ENCODE measurements at regions of chr5 and their contacts with region 1.

Region 1: GRCh38 chr5:172188033-172188892 is at the start of gene STK10:
- DNase-seq: peak; percentile 94
- H3K4me3 Mint-ChIP-seq: peak within 1 kb of the TSS; percentile 96
- H3K27ac Mint-ChIP-seq: peak within 1 kb of the TSS; percentile 94
- H3K4me1 Mint-ChIP-seq: peaks cover 32% of the 10 kb centered on the region
- H3K27me3 Mint-ChIP-seq: peaks cover 20% of the 10 kb centered on the region

Region 2: DNA sequence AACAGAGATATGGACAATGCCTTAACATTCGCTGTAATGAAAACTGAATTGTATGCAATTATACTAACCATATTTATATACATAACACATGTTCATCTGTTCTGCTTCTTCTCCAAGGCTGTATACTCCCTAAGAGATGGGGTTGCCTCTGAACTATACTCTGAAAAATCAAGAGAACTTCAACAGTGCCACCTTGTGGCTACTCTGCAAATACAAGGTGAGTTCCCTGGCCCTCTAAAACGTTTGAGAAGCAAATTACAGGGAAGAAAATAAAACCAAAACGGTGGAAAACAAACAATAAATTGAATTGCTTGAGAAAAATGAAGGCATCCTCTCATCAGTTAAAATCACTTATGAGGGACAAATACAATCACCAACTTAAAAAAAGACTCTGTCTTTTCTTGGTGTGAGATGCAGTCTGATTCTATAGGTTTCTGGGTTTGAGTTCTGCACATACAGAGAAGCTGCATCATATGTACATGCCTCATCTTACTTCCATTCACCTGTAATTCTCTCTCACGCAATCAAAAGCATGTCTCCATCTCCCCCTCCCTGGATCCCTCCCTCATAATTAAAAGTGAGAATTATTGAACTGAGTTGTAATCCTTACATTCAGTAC is 280.4 kb before region 1 on chr5:
- CTCF ChIA-PET with region 1: interaction called, 10 read pairs
- DNase-seq: peak; percentile 62
- H3K4me3 Mint-ChIP-seq: no peak overlapping the region
- H3K27ac Mint-ChIP-seq: no peak overlapping the region
- H3K4me1 Mint-ChIP-seq: peaks cover 30% of the 10 kb centered on the region
- H3K27me3 Mint-ChIP-seq: no peaks in the 10 kb centered on the region

Region 3: GRCh38 chr5:172065501-172065990 is 122.7 kb before region 1 on chr5:
- CTCF ChIA-PET with region 1: interaction called, 12 read pairs
- DNase-seq: peak; percentile 13
- H3K4me3 Mint-ChIP-seq: no peak overlapping the region
- H3K27ac Mint-ChIP-seq: peak overlapping the region; percentile 90
- H3K4me1 Mint-ChIP-seq: peaks cover 60% of the 10 kb centered on the region
- H3K27me3 Mint-ChIP-seq: no peaks in the 10 kb centered on the region

Region 4: GRCh38 chr5:172106511-172107356 is 81.5 kb before region 1 on chr5:
- CTCF ChIA-PET with region 1: interaction called, 69 read pairs
- DNase-seq: peak; percentile 73
- H3K4me3 Mint-ChIP-seq: no peak overlapping the region
- H3K27ac Mint-ChIP-seq: peak overlapping the region; percentile 83
- H3K4me1 Mint-ChIP-seq: peaks cover 54% of the 10 kb centered on the region
- H3K27me3 Mint-ChIP-seq: no peaks in the 10 kb centered on the region

Region 5: GRCh38 chr5:172114875-172115422 is 73.3 kb before region 1 on chr5:
- CTCF ChIA-PET with region 1: interaction called, 36 read pairs
- DNase-seq: peak; percentile 88
- H3K4me3 Mint-ChIP-seq: peak overlapping the region; percentile 74
- H3K27ac Mint-ChIP-seq: peak overlapping the region; percentile 96
- H3K4me1 Mint-ChIP-seq: peaks cover 87% of the 10 kb centered on the region
- H3K27me3 Mint-ChIP-seq: no peaks in the 10 kb centered on the region

Region 6: DNA sequence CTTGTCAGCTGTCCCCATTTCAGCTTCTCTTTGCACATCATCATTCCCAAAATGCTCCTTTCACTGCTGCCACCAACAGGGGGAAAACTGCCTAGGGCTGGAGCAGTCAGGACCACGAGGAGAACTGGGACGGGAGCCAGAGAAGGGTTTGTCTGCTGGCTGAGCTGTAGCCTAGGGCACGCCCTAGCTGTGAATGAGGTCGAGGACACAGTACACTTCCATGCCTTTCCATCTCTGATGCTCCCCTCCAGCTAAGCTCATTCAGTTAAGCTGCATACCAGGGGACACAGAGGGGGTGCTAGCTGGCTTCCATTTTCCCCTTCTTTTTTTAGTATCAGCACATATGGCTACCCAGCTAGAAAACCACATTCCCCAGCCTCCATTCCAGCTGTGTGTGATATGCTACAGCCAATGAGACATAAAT is 65.0 kb before region 1 on chr5:
- CTCF ChIA-PET with region 1: interaction called, 10 read pairs
- DNase-seq: no peak
- H3K4me3 Mint-ChIP-seq: no peak overlapping the region
- H3K27ac Mint-ChIP-seq: peak overlapping the region; percentile 37
- H3K4me1 Mint-ChIP-seq: peaks cover 40% of the 10 kb centered on the region
- H3K27me3 Mint-ChIP-seq: no peaks in the 10 kb centered on the region

Region 7: DNA sequence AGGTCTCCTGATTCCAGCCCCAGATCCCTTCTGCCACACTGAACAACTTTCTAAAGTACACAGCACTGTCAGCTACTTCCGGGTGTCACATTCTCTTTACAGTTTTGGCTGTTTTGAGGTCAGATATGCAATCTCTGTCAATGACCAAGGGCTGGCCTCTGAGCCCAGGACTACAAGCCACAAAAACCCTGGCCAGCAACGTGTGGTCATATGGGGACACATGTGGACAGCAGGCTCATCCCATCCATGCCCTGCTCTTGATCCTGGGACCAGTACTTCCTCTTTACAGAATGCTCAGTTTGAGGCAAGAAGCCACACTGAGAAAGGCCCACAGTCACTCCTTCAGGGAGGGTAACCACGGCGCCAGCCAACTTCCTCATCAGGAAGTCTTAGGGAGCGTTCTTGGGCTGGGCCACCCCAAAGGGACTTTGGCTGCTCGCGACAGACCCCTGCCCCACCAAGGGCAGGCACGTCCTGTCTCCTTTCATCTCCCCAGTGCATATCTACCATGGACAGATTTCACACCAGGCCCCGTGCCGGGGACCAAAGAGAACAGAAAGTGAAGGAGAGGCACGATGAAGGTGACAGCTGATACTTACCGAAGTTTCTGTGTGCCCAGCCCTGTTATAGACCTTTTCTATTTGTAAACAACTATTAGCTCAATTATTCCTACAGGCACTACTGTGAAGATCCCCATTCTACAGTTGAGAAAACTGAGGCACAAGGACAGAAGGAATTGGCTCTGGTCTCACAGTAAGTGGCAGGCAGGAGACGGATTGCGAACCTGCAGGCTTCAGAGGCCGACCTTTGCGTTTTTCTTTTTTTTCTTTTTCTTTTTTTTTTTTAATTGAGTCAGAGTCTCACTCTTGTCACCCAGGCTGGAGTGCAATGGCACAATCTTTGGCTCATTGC is 37.5 kb before region 1 on chr5:
- CTCF ChIA-PET with region 1: interaction called, 11 read pairs
- DNase-seq: peak; percentile 58
- H3K4me3 Mint-ChIP-seq: peak overlapping the region; percentile 51
- H3K27ac Mint-ChIP-seq: peak overlapping the region; percentile 84
- H3K4me1 Mint-ChIP-seq: peaks cover 66% of the 10 kb centered on the region
- H3K27me3 Mint-ChIP-seq: no peaks in the 10 kb centered on the region

Region 8: GRCh38 chr5:172245703-172246125 is 57.5 kb after region 1 on chr5:
- CTCF ChIA-PET with region 1: no interaction called
- DNase-seq: no peak
- H3K4me3 Mint-ChIP-seq: no peak overlapping the region
- H3K27ac Mint-ChIP-seq: no peak overlapping the region
- H3K4me1 Mint-ChIP-seq: peaks cover 2% of the 10 kb centered on the region
- H3K27me3 Mint-ChIP-seq: no peaks in the 10 kb centered on the region

Region 9: GRCh38 chr5:172370648-172371545 is 182.6 kb after region 1 on chr5:
- CTCF ChIA-PET with region 1: no interaction called
- DNase-seq: peak; percentile 62
- H3K4me3 Mint-ChIP-seq: no peak overlapping the region
- H3K27ac Mint-ChIP-seq: no peak overlapping the region
- H3K4me1 Mint-ChIP-seq: no peaks in the 10 kb centered on the region
- H3K27me3 Mint-ChIP-seq: peaks cover 11% of the 10 kb centered on the region